CD4-positive, alpha-beta memory T cell (primary cell): ENCODE measurements at regions of chr1 and their contacts with region 1.

Region 1: DNA sequence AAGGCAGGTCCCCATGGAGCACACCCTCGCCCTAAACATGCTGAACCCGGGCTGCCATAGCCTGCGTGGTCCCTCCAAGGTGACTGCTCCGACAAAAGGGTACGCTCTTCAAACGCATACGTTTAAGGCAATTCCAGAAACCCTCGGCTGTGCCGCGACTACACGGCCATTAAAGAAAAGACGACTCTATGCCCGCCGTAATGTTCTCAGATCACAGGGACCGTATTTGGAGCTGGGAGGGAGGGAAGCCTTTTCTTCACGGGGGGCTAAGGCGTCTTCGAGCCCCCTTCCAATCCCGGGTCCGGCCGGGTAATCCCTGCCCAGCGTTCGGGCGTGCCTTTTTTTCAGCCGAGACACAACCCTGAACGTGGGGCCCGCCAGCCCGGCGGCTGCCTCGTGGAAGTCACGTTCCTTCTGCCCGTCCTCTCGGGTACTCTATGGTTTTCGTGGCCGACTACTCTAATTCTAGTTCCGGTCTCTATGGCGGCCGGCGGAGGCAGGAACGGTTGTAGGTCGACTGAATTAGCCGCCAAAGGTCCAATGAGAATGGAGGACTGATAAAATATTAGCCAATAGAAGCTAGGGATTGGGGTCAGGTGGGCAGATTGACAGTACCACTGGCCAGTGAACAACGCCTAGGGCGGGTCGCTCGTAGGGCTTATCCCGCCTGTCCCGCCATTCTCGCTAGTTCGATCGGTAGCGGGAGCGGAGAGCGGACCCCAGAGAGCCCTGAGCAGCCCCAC is at the start of gene YBX1:
- DNase-seq: peak; percentile 97 to 98 (median 97)
- H3K4me3 ChIP-seq: peak within 1 kb of the TSS; percentile 77 to 90
- H3K4me3 Mint-ChIP-seq: peak within 1 kb of the TSS; percentile 96 to 100 (median 98)
- H3K27ac ChIP-seq: peak within 1 kb of the TSS; percentile 78
- H3K27ac Mint-ChIP-seq: peak within 1 kb of the TSS; percentile 96 to 99 (median 99)
- H3K4me1 ChIP-seq: peaks cover 49% of the 10 kb centered on the region
- H3K4me1 Mint-ChIP-seq: peaks cover 43 to 61% (median 52%) of the 10 kb centered on the region in 4 donors
- H3K27me3 ChIP-seq: no peaks in the 10 kb centered on the region
- H3K27me3 Mint-ChIP-seq: no peaks in the 10 kb centered on the region
- total RNA-seq, gene YBX1: 328 TPM

Region 2: GRCh38 chr1:42209621-42210251 is 472.2 kb before region 1 on chr1:
- CTCF ChIA-PET with region 1: no interaction called
- POLR2A ChIA-PET with region 1: no interaction called
- intact Hi-C with region 1: no loop called
- DNase-seq: no peak
- H3K4me3 ChIP-seq: no peak overlapping the region
- H3K4me3 Mint-ChIP-seq: no peak overlapping the region
- H3K27ac ChIP-seq: no peak overlapping the region
- H3K27ac Mint-ChIP-seq: peak overlapping the region in 2 of 7 donors; percentile 0 to 2
- H3K4me1 ChIP-seq: no peaks in the 10 kb centered on the region
- H3K4me1 Mint-ChIP-seq: peaks cover 23 to 58% (median 40%) of the 10 kb centered on the region in 4 donors
- H3K27me3 ChIP-seq: no peaks in the 10 kb centered on the region
- H3K27me3 Mint-ChIP-seq: no peaks in the 10 kb centered on the region

Region 3: GRCh38 chr1:42456010-42456758 is 225.7 kb before region 1 on chr1 and contains the starts of genes PPCS and ZMYND12:
- CTCF ChIA-PET with region 1: no interaction called
- POLR2A ChIA-PET with region 1: interaction called, 14 read pairs
- intact Hi-C with region 1: no loop called
- DNase-seq: peak; percentile 91 to 96 (median 93)
- H3K4me3 ChIP-seq: peak within 1 kb of the TSS; percentile 84 to 96
- H3K4me3 Mint-ChIP-seq: peak within 1 kb of the TSS; percentile 91 to 100 (median 99)
- H3K27ac ChIP-seq: peak within 1 kb of the TSS; percentile 99
- H3K27ac Mint-ChIP-seq: peak within 1 kb of the TSS; percentile 92 to 100 (median 99)
- H3K4me1 ChIP-seq: peaks cover 29% of the 10 kb centered on the region
- H3K4me1 Mint-ChIP-seq: peaks cover 21 to 43% (median 33%) of the 10 kb centered on the region in 4 donors
- H3K27me3 ChIP-seq: no peaks in the 10 kb centered on the region
- H3K27me3 Mint-ChIP-seq: no peaks in the 10 kb centered on the region
- total RNA-seq, gene PPCS: 61.1 to 65.2 TPM
- total RNA-seq, gene ZMYND12: 0.58 to 1.3 TPM

Region 4: GRCh38 chr1:42593486-42594100 is 88.3 kb before region 1 on chr1:
- CTCF ChIA-PET with region 1: no interaction called
- POLR2A ChIA-PET with region 1: no interaction called
- intact Hi-C with region 1: no loop called
- DNase-seq: no peak
- H3K4me3 ChIP-seq: no peak overlapping the region
- H3K4me3 Mint-ChIP-seq: no peak overlapping the region
- H3K27ac ChIP-seq: no peak overlapping the region
- H3K27ac Mint-ChIP-seq: no peak overlapping the region
- H3K4me1 ChIP-seq: no peaks in the 10 kb centered on the region
- H3K4me1 Mint-ChIP-seq: no peaks in the 10 kb centered on the region
- H3K27me3 ChIP-seq: no peaks in the 10 kb centered on the region
- H3K27me3 Mint-ChIP-seq: peaks cover 1 to 3% of the 10 kb centered on the region in 2 donors

Region 5: DNA sequence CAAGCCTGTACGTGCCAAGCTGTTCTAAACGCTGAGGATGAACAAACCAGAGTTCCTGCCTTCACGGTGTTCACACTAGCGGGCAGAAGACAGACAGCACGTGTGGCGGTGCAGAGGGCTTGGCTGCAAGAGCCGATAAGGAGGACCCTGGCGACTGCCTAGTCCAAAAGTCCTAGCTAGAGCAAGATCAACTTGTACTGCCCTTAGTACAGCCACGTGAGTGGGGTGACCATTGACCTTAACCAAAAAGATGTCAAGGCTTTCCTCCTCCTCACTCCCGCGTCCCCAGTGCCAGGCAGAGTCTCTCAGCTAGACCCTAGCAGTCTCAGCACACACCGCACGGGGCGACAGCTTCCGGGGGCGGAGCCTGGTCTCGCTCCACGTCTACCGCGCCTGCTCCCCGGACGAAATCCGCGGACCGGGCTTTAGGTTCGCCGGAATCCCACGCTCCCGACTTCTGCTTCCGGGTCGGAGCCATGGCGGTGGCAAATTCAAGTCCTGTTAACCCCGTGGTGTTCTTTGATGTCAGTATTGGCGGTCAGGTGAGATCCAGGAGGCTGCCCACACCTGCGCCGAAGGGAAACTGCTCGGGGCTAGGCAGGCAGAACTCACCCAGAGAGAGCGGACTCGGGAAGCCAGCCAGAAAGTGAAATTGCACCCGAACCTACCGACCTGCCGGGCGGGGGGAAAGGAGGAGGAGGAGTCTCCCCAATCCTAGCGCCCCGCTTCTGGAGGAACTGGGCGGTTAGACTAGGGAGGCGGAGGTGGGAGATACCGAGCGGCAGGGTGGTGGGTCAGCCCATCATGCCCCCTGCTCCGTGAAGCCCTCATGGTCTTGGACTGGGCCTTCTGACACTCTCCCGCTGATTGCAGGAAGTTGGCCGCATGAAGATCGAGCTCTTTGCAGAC is 23.7 kb before region 1 on chr1 and contains the start of gene PPIH:
- CTCF ChIA-PET with region 1: interaction called, 7 read pairs
- POLR2A ChIA-PET with region 1: interaction called, 123 read pairs
- intact Hi-C with region 1: loop called (anchors 1 kb)
- DNase-seq: peak; percentile 92 to 96 (median 93)
- H3K4me3 ChIP-seq: peak within 1 kb of the TSS; percentile 81 to 89
- H3K4me3 Mint-ChIP-seq: peak within 1 kb of the TSS; percentile 94 to 100 (median 98)
- H3K27ac ChIP-seq: peak within 1 kb of the TSS; percentile 65
- H3K27ac Mint-ChIP-seq: peak within 1 kb of the TSS; percentile 94 to 98 (median 95)
- H3K4me1 ChIP-seq: peaks cover 26% of the 10 kb centered on the region
- H3K4me1 Mint-ChIP-seq: peaks cover 21 to 47% (median 35%) of the 10 kb centered on the region in 4 donors
- H3K27me3 ChIP-seq: no peaks in the 10 kb centered on the region
- H3K27me3 Mint-ChIP-seq: no peaks in the 10 kb centered on the region
- total RNA-seq, gene PPIH: 40.5 to 42.9 TPM

Region 6: GRCh38 chr1:42698081-42698813 is 16.3 kb after region 1 on chr1:
- CTCF ChIA-PET with region 1: interaction called, 3 read pairs
- POLR2A ChIA-PET with region 1: interaction called, 39 read pairs
- intact Hi-C with region 1: no loop called
- DNase-seq: no peak
- H3K4me3 ChIP-seq: no peak overlapping the region
- H3K4me3 Mint-ChIP-seq: no peak overlapping the region
- H3K27ac ChIP-seq: no peak overlapping the region
- H3K27ac Mint-ChIP-seq: peak overlapping the region in 1 of 7 donors; percentile 4
- H3K4me1 ChIP-seq: peaks cover 6% of the 10 kb centered on the region
- H3K4me1 Mint-ChIP-seq: peaks cover 9 to 25% (median 16%) of the 10 kb centered on the region in 4 donors
- H3K27me3 ChIP-seq: no peaks in the 10 kb centered on the region
- H3K27me3 Mint-ChIP-seq: no peaks in the 10 kb centered on the region

Region 7: DNA sequence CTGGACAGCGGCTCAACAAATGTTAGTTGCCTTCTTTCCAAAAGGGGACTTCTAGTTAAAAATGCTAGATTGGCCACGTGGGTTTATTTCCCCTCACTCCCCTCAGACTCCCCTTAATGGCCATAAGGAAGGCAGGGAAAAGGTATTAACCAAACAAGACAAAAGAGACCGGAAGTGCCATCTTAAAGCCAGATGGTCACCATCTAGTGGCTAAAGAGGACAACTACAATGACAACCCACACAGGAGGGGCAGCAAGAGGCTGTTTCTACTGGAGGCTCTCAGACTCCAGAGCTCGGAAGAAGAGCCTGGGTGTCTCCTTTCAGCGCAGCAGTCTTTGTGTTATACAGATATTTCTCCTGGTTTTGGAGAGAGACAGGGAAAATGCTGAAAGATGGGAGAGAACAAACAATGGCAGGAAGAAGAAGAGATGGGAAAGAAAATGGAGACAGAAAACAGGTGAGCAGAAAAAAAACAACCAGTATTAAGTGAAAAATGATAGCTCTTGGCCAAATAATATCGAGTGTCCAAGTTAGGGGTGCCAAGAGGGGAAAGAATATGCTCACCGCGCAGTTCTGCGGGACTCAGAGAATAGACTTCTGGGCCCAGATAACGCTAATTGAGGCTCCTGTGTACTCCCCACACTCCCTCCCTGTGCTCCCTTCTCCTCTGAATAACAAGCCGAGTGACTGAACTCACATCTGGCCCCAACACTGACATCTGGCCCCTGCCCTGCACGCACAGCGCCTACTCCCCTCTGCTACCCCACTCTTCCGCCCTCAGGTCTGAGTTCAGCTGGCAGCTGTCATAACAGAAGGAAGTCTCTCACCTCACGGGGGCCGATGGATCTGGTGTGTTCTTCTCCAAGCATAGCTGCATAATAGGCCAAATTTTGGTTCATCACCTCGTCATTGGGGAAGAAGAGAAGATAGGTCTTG is 75.3 kb after region 1 on chr1:
- CTCF ChIA-PET with region 1: no interaction called
- POLR2A ChIA-PET with region 1: no interaction called
- intact Hi-C with region 1: no loop called
- DNase-seq: peak in 4 of 5 donors; percentile 20 to 26 (median 24)
- H3K4me3 ChIP-seq: no peak overlapping the region
- H3K4me3 Mint-ChIP-seq: no peak overlapping the region
- H3K27ac ChIP-seq: no peak overlapping the region
- H3K27ac Mint-ChIP-seq: peak overlapping the region in 5 of 7 donors; percentile 42 to 85 (median 70)
- H3K4me1 ChIP-seq: no peaks in the 10 kb centered on the region
- H3K4me1 Mint-ChIP-seq: peaks cover 0 to 10% (median under 1%) of the 10 kb centered on the region in 4 donors
- H3K27me3 ChIP-seq: no peaks in the 10 kb centered on the region
- H3K27me3 Mint-ChIP-seq: no peaks in the 10 kb centered on the region

Region 8: GRCh38 chr1:42846257-42847110 is 164.6 kb after region 1 on chr1 and contains the start of gene ZNF691:
- CTCF ChIA-PET with region 1: interaction called, 3 read pairs
- POLR2A ChIA-PET with region 1: interaction called, 3 read pairs
- intact Hi-C with region 1: loop called (anchors 2 kb)
- DNase-seq: peak; percentile 88 to 94 (median 89)
- H3K4me3 ChIP-seq: peak within 1 kb of the TSS; percentile 74 to 84
- H3K4me3 Mint-ChIP-seq: peak within 1 kb of the TSS; percentile 91 to 98 (median 96)
- H3K27ac ChIP-seq: peak within 1 kb of the TSS; percentile 72
- H3K27ac Mint-ChIP-seq: peak within 1 kb of the TSS; percentile 59 to 95 (median 86)
- H3K4me1 ChIP-seq: peaks cover 23% of the 10 kb centered on the region
- H3K4me1 Mint-ChIP-seq: peaks cover 27 to 38% (median 35%) of the 10 kb centered on the region in 4 donors
- H3K27me3 ChIP-seq: no peaks in the 10 kb centered on the region
- H3K27me3 Mint-ChIP-seq: no peaks in the 10 kb centered on the region
- total RNA-seq, gene ZNF691: 17.3 to 18.8 TPM